Colonic mucosa (tissue), 4 donors: ENCODE measurements at regions of chr11 and their contacts with region 1.

Region 1: GRCh38 chr11:12680246-12680939 is 6.2 kb downstream of the TEAD1 start:
- DNase-seq: peak; percentile 92
- H3K4me3 ChIP-seq: no peak overlapping the region
- H3K27ac ChIP-seq: peak overlapping the region; percentile 75
- H3K4me1 ChIP-seq: peaks cover 12% of the 10 kb centered on the region
- H3K27me3 ChIP-seq: no peaks in the 10 kb centered on the region
- CTCF ChIP-seq: no peak

Region 2: GRCh38 chr11:12802418-12803085 is 122.2 kb after region 1 on chr11:
- intact Hi-C with region 1: loop called (anchors 5 kb)
- DNase-seq: peak; percentile 89
- H3K4me3 ChIP-seq: no peak overlapping the region
- H3K27ac ChIP-seq: peak overlapping the region; percentile 74
- H3K4me1 ChIP-seq: peaks cover 24% of the 10 kb centered on the region
- H3K27me3 ChIP-seq: no peaks in the 10 kb centered on the region
- CTCF ChIP-seq: no peak